ENCODE measurements at regions of chr2 and their contacts with region 1.

Region 1: DNA sequence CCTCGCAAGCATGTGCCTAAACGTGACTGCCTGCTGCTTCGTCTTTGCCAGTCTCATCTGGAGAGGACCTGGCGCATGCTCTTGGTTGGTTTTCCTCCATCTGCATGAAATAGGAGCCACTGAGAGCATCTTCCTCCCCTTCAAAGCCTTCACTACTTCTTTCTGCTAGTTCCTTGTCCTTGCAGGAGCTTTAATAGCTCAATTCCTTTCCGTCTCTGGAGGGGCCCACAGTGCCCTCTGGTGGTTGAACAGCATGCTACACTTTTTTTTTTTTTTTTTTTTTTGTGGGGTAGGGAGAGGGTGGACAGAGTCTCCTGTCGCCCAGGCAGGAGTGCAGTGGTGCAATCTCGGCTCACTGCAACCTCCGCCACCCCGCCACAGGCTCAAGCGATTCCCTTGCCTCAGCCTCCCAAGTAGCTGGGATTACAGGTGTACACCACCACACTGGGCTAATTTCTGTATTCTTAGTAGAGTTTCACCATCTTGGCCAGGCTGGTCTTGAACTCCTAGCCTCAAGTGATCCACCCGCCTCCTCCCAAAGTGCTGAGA is 59.6 kb downstream of the SP110 start:
- DNase-seq: peak; percentile 77
- CTCF ChIP-seq: peak; percentile 64

Region 2: GRCh38 chr2:229780856-229781773 is 379.1 kb before region 1 on chr2:
- CTCF ChIA-PET with region 1: interaction called, 10 read pairs
- POLR2A ChIA-PET with region 1: no interaction called
- DNase-seq: peak; percentile 45
- CTCF ChIP-seq: peak; percentile 78

Region 3: GRCh38 chr2:230068016-230068650 is 92.1 kb before region 1 on chr2:
- CTCF ChIA-PET with region 1: interaction called, 30 read pairs
- POLR2A ChIA-PET with region 1: no interaction called
- DNase-seq: peak; percentile 53
- CTCF ChIP-seq: peak; percentile 29

Region 4: DNA sequence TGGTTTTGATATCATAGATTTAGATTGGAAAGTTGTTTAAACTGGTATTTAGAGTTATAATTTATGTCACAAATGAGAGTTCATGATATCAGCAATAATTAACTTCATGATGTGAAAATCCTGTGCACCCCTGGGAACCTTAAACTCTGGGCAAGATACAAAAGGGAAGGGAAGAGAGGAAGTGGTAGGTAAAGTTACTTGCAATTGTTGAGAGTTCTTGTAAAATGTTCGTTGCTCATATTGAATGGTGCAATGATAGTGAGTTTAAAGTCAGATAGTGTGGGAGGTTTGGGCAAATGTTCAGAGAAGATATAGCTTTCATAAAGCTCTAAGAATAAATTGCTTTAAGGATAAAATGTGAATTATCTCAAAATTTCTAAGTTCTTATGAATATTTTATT is 15.8 kb before region 1 on chr2:
- CTCF ChIA-PET with region 1: interaction called, 24 read pairs
- POLR2A ChIA-PET with region 1: no interaction called
- DNase-seq: no peak
- CTCF ChIP-seq: no peak

Region 5: GRCh38 chr2:230179907-230180306 is 19.7 kb after region 1 on chr2:
- CTCF ChIA-PET with region 1: interaction called, 61 read pairs
- POLR2A ChIA-PET with region 1: no interaction called
- DNase-seq: no peak
- CTCF ChIP-seq: no peak

Region 6: GRCh38 chr2:230216489-230216888 is 56.3 kb after region 1 on chr2:
- CTCF ChIA-PET with region 1: no interaction called
- POLR2A ChIA-PET with region 1: no interaction called
- DNase-seq: no peak
- CTCF ChIP-seq: no peak